Cardiac septum (tissue), 1 donor: ENCODE measurements at regions of chrX and their contacts with region 1.

Region 1: DNA sequence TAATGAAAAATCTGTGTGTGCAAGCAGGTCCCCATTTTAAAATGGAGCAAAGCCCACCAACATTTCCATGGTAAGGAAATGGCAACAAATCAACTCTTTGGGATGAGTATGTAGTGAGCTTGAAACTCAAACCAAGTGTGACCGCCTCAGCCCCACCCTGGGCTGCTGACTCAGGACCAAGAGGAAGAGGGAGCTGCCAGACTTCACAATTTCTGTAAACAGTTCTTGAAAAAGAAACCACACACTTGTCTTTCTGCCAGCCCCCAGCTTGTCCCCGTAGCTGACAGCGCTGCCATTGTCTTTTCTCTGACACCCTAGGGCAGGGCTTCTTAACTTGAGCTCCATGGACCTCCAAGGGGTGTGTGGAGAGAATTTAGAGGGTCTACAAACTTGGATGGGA is 10.3 kb downstream of the RTL5 start:
- DNase-seq: peak; percentile 87

Region 2: GRCh38 chrX:72048968-72049367 is 72.4 kb before region 1 on chrX:
- intact Hi-C with region 1: loop called (anchors 2 kb)
- DNase-seq: no peak

Region 3: DNA sequence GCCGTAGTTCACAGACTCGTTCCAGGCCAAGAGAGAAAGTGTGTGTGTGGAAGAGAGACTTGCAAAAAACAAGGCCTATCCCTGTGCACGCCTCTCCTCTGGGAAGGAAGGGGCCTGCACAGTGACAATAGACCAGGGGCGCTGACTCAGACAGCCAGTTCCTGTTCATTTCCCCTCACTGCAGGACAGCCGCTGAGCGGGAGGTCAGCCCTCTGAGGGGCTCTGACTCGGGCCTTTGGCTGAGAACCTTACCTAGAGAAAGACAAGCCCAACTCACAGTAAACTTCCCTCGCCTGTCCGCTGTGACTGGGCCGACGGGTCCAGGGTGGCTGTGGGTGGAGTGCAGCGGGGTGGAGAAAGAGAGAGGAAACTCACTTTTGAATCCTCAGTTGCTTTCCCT is 41.8 kb before region 1 on chrX:
- intact Hi-C with region 1: loop called (anchors 2 kb)
- DNase-seq: no peak